ENCODE measurements at regions of chr9 and their contacts with region 1.

Region 1: DNA sequence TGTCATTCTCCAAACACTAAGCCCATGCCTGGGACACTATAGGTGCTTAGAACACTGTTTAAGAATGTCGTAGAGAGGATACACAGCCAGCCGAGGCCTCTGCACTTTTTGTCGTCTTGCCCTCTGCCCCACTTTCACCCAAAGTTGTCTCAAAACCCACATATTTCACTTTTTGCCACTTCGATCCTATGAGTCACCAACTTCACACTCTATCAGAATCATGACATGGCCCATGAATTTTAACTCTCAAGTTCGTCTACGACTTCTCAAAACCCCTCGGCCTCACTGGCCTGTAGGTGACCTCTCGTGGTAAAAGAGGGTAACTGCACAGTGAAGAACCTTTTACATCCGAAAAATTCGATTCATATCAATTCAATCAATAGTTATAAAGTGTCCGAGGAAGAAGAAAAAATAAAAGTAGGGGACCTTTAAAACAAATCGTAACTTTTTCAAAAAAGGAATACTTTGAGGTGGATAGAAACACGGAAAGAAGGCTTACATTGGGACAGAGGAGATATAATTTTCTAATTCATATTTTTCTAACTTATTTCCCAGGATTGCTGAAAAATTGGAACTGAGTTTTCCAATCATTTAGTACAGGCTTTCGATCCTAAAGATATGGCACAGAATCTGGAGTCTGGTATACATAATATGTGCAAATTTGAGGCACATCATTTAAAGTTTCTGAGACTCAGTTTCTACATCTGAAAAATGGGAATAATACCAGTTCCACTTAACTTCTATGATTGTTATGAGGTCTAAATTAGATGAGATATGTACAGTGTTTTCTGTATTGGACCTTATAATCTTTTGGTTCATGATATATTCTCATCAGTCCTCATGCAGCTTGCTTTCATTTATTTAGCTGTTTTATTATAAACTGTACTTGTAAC is 122.6 kb downstream of the APBA1 start:
- DNase-seq: peak; percentile 30
- H3K4me3 Mint-ChIP-seq: no peak overlapping the region
- H3K27ac Mint-ChIP-seq: no peak overlapping the region
- H3K4me1 Mint-ChIP-seq: peaks cover 38% of the 10 kb centered on the region
- H3K27me3 Mint-ChIP-seq: no peaks in the 10 kb centered on the region
- CTCF ChIP-seq: peak; percentile 29

Region 2: GRCh38 chr9:69397384-69398214 is 152.0 kb before region 1 on chr9:
- CTCF ChIA-PET with region 1: no interaction called
- intact Hi-C with region 1: no loop called
- DNase-seq: no peak
- H3K4me3 Mint-ChIP-seq: no peak overlapping the region
- H3K27ac Mint-ChIP-seq: no peak overlapping the region
- H3K4me1 Mint-ChIP-seq: peaks cover 7% of the 10 kb centered on the region
- H3K27me3 Mint-ChIP-seq: peaks cover 3% of the 10 kb centered on the region
- CTCF ChIP-seq: no peak

Region 3: GRCh38 chr9:69421908-69422801 is 127.4 kb before region 1 on chr9:
- CTCF ChIA-PET with region 1: interaction called, 10 read pairs
- intact Hi-C with region 1: loop called (anchors 1 kb)
- DNase-seq: peak; percentile 61
- H3K4me3 Mint-ChIP-seq: no peak overlapping the region
- H3K27ac Mint-ChIP-seq: peak overlapping the region; percentile 47
- H3K4me1 Mint-ChIP-seq: peaks cover 10% of the 10 kb centered on the region
- H3K27me3 Mint-ChIP-seq: no peaks in the 10 kb centered on the region
- CTCF ChIP-seq: peak; percentile 60

Region 4: GRCh38 chr9:69919461-69920061 is 370.0 kb after region 1 on chr9:
- CTCF ChIA-PET with region 1: no interaction called
- intact Hi-C with region 1: loop called (anchors 10 kb)
- DNase-seq: no peak
- H3K4me3 Mint-ChIP-seq: no peak overlapping the region
- H3K27ac Mint-ChIP-seq: no peak overlapping the region
- H3K4me1 Mint-ChIP-seq: no peaks in the 10 kb centered on the region
- H3K27me3 Mint-ChIP-seq: no peaks in the 10 kb centered on the region
- CTCF ChIP-seq: peak; percentile 50

Measured in Calu3 (cell line).